ENCODE measurements at regions of chr12 and their contacts with region 1.

Region 1: GRCh38 chr12:62934799-62935674 is at the start of gene PPM1H:
- DNase-seq: peak; percentile 89 to 94 (median 91)
- H3K4me3 ChIP-seq: peak within 1 kb of the TSS; percentile 75 to 99 (median 91)
- H3K27ac ChIP-seq: peak within 1 kb of the TSS; percentile 46 to 66
- H3K4me1 ChIP-seq: peaks cover 0 to 44% (median 29%) of the 10 kb centered on the region in 4 experiments
- H3K27me3 ChIP-seq: no peaks in the 10 kb centered on the region

Region 2: DNA sequence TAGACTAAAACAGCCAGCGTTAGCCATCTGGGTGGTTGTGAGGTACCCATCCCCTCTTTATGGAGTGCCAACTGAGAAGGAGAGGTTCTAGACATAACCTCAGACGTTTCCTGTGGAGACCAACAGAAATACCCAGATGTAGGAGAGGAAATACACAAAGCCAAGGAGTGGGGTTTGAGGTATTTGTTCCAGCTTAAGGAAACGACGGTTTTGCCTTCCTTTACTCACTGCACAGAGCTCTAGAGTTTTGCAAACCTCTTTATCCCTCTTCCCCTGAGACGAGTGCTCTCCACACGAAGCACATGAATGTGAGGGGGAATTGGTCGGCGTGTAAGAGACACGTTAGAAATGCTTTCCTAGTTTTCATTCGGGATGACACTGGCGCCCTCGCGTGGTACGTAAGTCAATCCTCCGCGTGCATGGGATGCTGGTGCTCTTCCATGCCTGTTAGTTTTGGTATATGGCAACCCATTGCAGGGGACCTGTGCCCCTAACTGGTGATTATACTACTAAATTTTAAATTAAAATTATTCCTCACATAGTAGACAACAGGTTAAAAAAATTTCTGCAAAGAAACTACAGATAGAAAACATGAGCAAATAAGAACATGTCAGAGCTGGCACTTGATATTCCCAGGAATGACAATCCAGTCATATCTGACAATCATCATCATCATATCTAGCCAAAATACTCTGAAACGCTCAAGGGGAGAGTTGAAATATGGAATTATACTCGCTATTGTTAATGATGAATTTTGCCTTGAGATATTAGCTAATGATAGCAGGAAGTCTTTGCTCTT is 121.8 kb before region 1 on chr12:
- CTCF ChIA-PET with region 1: interaction called, 27 read pairs
- POLR2A ChIA-PET with region 1: interaction called, 5 read pairs
- DNase-seq: peak; percentile 73 to 83 (median 79)
- H3K4me3 ChIP-seq: peak overlapping the region in 4 of 7 experiments; percentile 21 to 62 (median 54)
- H3K27ac ChIP-seq: peak overlapping the region in 1 of 2 experiments; percentile 11
- H3K4me1 ChIP-seq: peaks cover 5 to 62% (median 30%) of the 10 kb centered on the region in 4 experiments
- H3K27me3 ChIP-seq: no peaks in the 10 kb centered on the region

Region 3: GRCh38 chr12:62866451-62867082 is 68.5 kb before region 1 on chr12:
- CTCF ChIA-PET with region 1: interaction called, 11 read pairs
- POLR2A ChIA-PET with region 1: interaction called, 4 read pairs
- DNase-seq: peak in 2 of 3 donors; percentile 39 to 66
- H3K4me3 ChIP-seq: no peak overlapping the region
- H3K27ac ChIP-seq: no peak overlapping the region
- H3K4me1 ChIP-seq: peaks cover 0 to 13% (median 3%) of the 10 kb centered on the region in 4 experiments
- H3K27me3 ChIP-seq: no peaks in the 10 kb centered on the region

Region 4: DNA sequence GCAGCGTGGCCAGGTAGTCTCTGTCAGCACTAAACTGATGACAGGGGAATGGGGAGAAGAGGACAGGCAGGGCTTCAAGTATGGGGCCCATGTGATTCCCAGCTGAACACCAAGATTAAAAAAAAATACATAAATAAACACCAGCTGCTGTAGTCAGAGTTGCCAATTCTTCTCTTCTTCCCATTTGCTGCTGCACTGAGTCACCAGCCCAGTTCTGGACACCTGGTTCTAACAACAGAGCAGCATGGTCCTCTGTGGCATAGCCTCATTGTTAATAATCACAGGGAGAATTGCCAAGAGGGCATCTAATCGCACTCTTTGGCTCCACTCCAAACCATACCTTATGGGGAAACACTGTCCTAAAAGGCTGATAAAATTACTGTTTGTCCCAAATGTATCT is 15.2 kb before region 1 on chr12:
- CTCF ChIA-PET with region 1: interaction called, 25 read pairs
- POLR2A ChIA-PET with region 1: interaction called, 5 read pairs
- DNase-seq: peak in 2 of 3 donors; percentile 54 to 65
- H3K4me3 ChIP-seq: no peak overlapping the region
- H3K27ac ChIP-seq: no peak overlapping the region
- H3K4me1 ChIP-seq: peaks cover 0 to 8% (median 6%) of the 10 kb centered on the region in 4 experiments
- H3K27me3 ChIP-seq: no peaks in the 10 kb centered on the region

Region 5: GRCh38 chr12:63068857-63069442 is 133.9 kb after region 1 on chr12:
- CTCF ChIA-PET with region 1: interaction called, 10 read pairs
- POLR2A ChIA-PET with region 1: no interaction called
- DNase-seq: peak; percentile 72 to 87 (median 83)
- H3K4me3 ChIP-seq: no peak overlapping the region
- H3K27ac ChIP-seq: no peak overlapping the region
- H3K4me1 ChIP-seq: peaks cover 3 to 13% (median 8%) of the 10 kb centered on the region in 4 experiments
- H3K27me3 ChIP-seq: no peaks in the 10 kb centered on the region

Measured in common myeloid progenitor, CD34-positive (primary cell).